ENCODE measurements at regions of chr11 and their contacts with region 1.

Region 1: DNA sequence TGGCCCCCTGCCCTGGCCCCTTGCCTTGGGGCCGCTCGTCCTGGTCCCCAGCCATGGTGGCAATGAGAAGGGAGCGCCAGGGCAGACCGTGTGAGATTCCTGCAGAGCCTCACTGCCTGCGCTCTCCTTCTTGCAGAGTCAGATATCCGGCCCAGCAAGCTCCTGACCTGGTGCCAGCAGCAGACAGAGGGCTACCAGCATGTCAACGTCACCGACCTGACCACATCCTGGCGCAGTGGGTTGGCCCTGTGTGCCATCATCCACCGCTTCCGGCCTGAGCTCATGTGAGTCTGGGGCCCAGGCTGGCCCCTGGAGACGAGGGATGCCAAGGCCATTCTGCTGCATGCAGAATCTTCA is 114.1 kb downstream of the MICAL2 start:
- DNase-seq: peak; percentile 98
- ATAC-seq: peak; percentile 94
- H3K4me3 Mint-ChIP-seq: peak overlapping the region; percentile 57
- H3K27ac Mint-ChIP-seq: peak overlapping the region; percentile 96
- H3K4me1 Mint-ChIP-seq: peaks cover 52% of the 10 kb centered on the region
- H3K27me3 Mint-ChIP-seq: no peaks in the 10 kb centered on the region

Region 2: DNA sequence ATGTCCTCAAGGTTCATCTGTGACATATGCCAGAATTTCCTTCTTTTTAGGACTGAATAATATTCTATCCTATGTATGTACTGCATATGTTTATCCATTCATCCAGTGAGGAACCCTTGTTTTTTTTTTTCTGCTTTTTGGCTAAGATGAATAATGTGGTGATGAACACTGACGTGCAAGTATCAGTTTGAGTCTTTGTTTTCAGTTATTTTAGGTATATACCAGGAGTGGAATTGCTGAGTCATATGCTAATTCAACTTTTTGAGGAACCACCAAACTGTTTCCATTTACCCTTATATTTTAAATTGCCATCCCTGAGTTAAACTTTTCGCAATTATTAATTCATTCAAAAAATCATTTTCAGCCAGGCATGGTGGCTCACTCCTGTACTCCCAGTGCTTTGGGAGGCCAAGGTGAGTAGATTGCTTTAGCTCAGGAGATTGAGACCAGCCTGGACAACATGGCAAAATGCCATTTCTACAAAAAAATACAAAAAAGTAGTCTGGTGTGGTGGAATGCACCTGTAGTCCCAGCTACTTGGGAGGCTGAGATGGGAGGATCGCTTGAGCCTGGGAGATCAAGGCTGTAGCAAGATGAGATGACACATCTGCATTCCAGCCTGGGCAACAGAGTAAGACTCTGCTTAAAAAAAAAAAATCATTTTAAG is 49.9 kb before region 1 on chr11:
- CTCF ChIA-PET with region 1: no interaction called
- DNase-seq: no peak
- ATAC-seq: peak; percentile 73
- H3K4me3 Mint-ChIP-seq: peak overlapping the region; percentile 52
- H3K27ac Mint-ChIP-seq: peak overlapping the region; percentile 98
- H3K4me1 Mint-ChIP-seq: peaks cover 75% of the 10 kb centered on the region
- H3K27me3 Mint-ChIP-seq: no peaks in the 10 kb centered on the region

Region 3: GRCh38 chr11:12200279-12201010 is 24.1 kb before region 1 on chr11:
- CTCF ChIA-PET with region 1: interaction called, 14 read pairs
- DNase-seq: no peak
- ATAC-seq: no peak
- H3K4me3 Mint-ChIP-seq: no peak overlapping the region
- H3K27ac Mint-ChIP-seq: peak overlapping the region; percentile 96
- H3K4me1 Mint-ChIP-seq: peaks cover 71% of the 10 kb centered on the region
- H3K27me3 Mint-ChIP-seq: no peaks in the 10 kb centered on the region